CD8-positive, alpha-beta T cell (primary cell): ENCODE measurements at regions of chr13 and their contacts with region 1.

Region 1: GRCh38 chr13:110715395-110716235 is 2.1 kb downstream of the ING1 start:
- DNase-seq: peak; percentile 91 to 99 (median 95)
- ATAC-seq: peak; percentile 58
- H3K4me3 ChIP-seq: peak overlapping the region; percentile 68 to 100
- H3K4me3 Mint-ChIP-seq: peak overlapping the region; percentile 99
- H3K27ac ChIP-seq: peak overlapping the region; percentile 76 to 91
- H3K27ac Mint-ChIP-seq: peak overlapping the region; percentile 97
- H3K4me1 ChIP-seq: peaks cover 29% of the 10 kb centered on the region
- H3K4me1 Mint-ChIP-seq: peaks cover 34% of the 10 kb centered on the region
- H3K27me3 ChIP-seq: no peaks in the 10 kb centered on the region
- H3K27me3 Mint-ChIP-seq: no peaks in the 10 kb centered on the region
- CTCF ChIP-seq: no peak

Region 2: GRCh38 chr13:110561344-110562035 is 154.1 kb before region 1 on chr13 and contains the start of gene RAB20:
- CTCF ChIA-PET with region 1: interaction called, 3 read pairs
- POLR2A ChIA-PET with region 1: no interaction called
- intact Hi-C with region 1: loop called in 1 of 2 experiments (anchors 5 kb)
- DNase-seq: peak in 8 of 9 experiments; percentile 28 to 69 (median 54)
- ATAC-seq: peak; percentile 69
- H3K4me3 ChIP-seq: peak within 1 kb of the TSS; percentile 81 to 94
- H3K4me3 Mint-ChIP-seq: peak within 1 kb of the TSS; percentile 99
- H3K27ac ChIP-seq: peak within 1 kb of the TSS; percentile 37 to 52
- H3K27ac Mint-ChIP-seq: peak within 1 kb of the TSS; percentile 90
- H3K4me1 ChIP-seq: peaks cover 20% of the 10 kb centered on the region
- H3K4me1 Mint-ChIP-seq: peaks cover 15% of the 10 kb centered on the region
- H3K27me3 ChIP-seq: peaks cover 0 to 2% of the 10 kb centered on the region in 2 experiments
- H3K27me3 Mint-ChIP-seq: peaks cover 4% of the 10 kb centered on the region
- CTCF ChIP-seq: no peak
- total RNA-seq, gene RAB20: 1.2 to 1.3 TPM

Region 3: DNA sequence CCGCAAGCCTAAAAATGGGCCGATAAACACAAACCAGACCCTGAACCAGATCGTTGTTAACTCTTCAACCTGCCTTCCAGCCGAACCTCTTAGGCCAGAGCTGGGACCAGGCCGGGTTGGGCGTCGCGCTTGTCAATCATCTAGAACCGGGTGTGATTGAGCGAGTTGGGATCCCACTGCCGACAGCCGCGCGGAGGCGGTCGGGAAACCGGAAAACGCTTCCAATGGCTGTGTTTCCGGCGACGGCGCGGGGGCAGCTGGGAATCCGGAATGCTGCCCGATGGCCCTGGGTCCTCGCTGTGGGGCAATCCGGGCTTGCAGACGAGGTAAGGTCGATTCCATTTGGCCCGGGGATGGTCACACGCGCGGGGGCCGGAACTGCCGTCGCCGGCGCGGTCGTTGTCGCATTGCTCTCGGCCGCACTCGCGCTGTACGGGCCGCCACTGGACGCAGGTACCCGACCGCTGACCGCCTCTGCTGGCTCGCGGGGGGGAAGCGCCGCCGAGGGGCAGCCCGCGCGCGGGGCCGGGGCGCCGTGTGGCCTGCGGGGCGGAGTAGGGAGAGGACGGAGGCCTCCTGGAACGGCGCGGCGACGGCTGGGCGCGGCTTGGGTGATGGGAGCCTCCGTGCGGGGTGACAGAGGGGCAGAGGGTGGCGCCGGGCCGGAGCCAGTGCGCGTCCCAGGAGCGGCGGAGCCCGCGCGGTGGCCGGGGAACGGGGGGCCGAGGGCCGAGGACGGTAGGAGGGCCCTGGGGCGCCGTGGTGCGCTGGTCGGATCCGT is 100.1 kb before region 1 on chr13 and contains the start of gene NAXD:
- CTCF ChIA-PET with region 1: no interaction called
- POLR2A ChIA-PET with region 1: interaction called, 15 read pairs
- intact Hi-C with region 1: loop called in 1 of 2 experiments (anchors 1 kb)
- DNase-seq: peak; percentile 44 to 89 (median 72)
- ATAC-seq: peak; percentile 81
- H3K4me3 ChIP-seq: peak within 1 kb of the TSS; percentile 85 to 90
- H3K4me3 Mint-ChIP-seq: peak within 1 kb of the TSS; percentile 93
- H3K27ac ChIP-seq: peak within 1 kb of the TSS; percentile 53 to 59
- H3K27ac Mint-ChIP-seq: peak within 1 kb of the TSS; percentile 95
- H3K4me1 ChIP-seq: peaks cover 23% of the 10 kb centered on the region
- H3K4me1 Mint-ChIP-seq: peaks cover 34% of the 10 kb centered on the region
- H3K27me3 ChIP-seq: no peaks in the 10 kb centered on the region
- H3K27me3 Mint-ChIP-seq: no peaks in the 10 kb centered on the region
- CTCF ChIP-seq: no peak
- total RNA-seq, gene NAXD: 23.4 to 25.6 TPM

Region 4: DNA sequence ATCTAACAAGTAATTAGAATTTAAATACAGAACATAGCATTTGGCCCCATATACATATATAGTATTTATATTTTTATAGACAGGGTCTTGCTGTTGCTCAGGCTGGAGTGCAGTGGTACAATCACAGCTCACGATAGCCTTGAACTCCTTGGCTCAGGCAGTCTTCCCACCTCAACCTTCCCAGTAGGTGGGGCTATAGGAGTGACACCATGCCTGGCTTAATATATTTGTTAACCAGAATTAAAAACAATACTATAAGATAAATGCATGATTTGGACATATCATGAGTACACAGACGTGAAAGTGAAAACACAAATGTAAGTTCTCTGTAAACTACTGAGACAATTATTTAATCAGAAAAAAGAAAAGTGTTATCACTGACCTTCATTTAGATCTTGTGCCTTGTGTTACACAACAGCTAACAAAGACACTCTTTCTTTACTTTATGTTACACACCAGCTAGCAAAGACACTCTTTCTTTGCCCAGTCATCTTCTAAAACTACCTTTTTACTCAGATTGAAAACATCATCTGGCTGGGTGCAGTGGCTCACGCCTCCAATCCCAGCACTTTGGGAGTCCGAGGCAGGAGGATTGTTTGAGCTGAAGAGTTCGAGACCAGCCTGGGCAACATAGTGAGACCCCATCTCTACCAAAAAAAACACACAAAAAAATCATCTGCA is 32.3 kb before region 1 on chr13:
- CTCF ChIA-PET with region 1: no interaction called
- POLR2A ChIA-PET with region 1: interaction called, 6 read pairs
- intact Hi-C with region 1: loop called in 1 of 2 experiments (anchors 1 kb)
- DNase-seq: peak in 3 of 9 experiments; percentile 32 to 59 (median 54)
- ATAC-seq: no peak
- H3K4me3 ChIP-seq: no peak overlapping the region
- H3K4me3 Mint-ChIP-seq: no peak overlapping the region
- H3K27ac ChIP-seq: no peak overlapping the region
- H3K27ac Mint-ChIP-seq: peak overlapping the region; percentile 32
- H3K4me1 ChIP-seq: no peaks in the 10 kb centered on the region
- H3K4me1 Mint-ChIP-seq: peaks cover 4% of the 10 kb centered on the region
- H3K27me3 ChIP-seq: no peaks in the 10 kb centered on the region
- H3K27me3 Mint-ChIP-seq: no peaks in the 10 kb centered on the region
- CTCF ChIP-seq: peak; percentile 19

Region 5: GRCh38 chr13:110737555-110737954 is 21.9 kb after region 1 on chr13:
- CTCF ChIA-PET with region 1: no interaction called
- POLR2A ChIA-PET with region 1: no interaction called
- intact Hi-C with region 1: no loop called
- DNase-seq: no peak
- ATAC-seq: no peak
- H3K4me3 ChIP-seq: no peak overlapping the region
- H3K4me3 Mint-ChIP-seq: no peak overlapping the region
- H3K27ac ChIP-seq: no peak overlapping the region
- H3K27ac Mint-ChIP-seq: no peak overlapping the region
- H3K4me1 ChIP-seq: no peaks in the 10 kb centered on the region
- H3K4me1 Mint-ChIP-seq: no peaks in the 10 kb centered on the region
- H3K27me3 ChIP-seq: no peaks in the 10 kb centered on the region
- H3K27me3 Mint-ChIP-seq: no peaks in the 10 kb centered on the region
- CTCF ChIP-seq: no peak

Region 6: GRCh38 chr13:111153279-111153976 is 437.8 kb after region 1 on chr13:
- CTCF ChIA-PET with region 1: no interaction called
- POLR2A ChIA-PET with region 1: no interaction called
- intact Hi-C with region 1: loop called in 1 of 2 experiments (anchors 1 kb)
- DNase-seq: peak; percentile 86 to 96 (median 94)
- ATAC-seq: peak; percentile 81
- H3K4me3 ChIP-seq: peak overlapping the region; percentile 67 to 96
- H3K4me3 Mint-ChIP-seq: peak overlapping the region; percentile 96
- H3K27ac ChIP-seq: peak overlapping the region; percentile 75 to 79
- H3K27ac Mint-ChIP-seq: peak overlapping the region; percentile 96
- H3K4me1 ChIP-seq: peaks cover 20% of the 10 kb centered on the region
- H3K4me1 Mint-ChIP-seq: peaks cover 34% of the 10 kb centered on the region
- H3K27me3 ChIP-seq: no peaks in the 10 kb centered on the region
- H3K27me3 Mint-ChIP-seq: no peaks in the 10 kb centered on the region
- CTCF ChIP-seq: no peak

Region 7: GRCh38 chr13:111184458-111185401 is 469.1 kb after region 1 on chr13:
- CTCF ChIA-PET with region 1: no interaction called
- POLR2A ChIA-PET with region 1: interaction called, 3 read pairs
- intact Hi-C with region 1: loop called in 1 of 2 experiments (anchors 10 kb)
- DNase-seq: peak in 8 of 9 experiments; percentile 43 to 82 (median 66)
- ATAC-seq: peak; percentile 48
- H3K4me3 ChIP-seq: peak overlapping the region; percentile 5 to 22
- H3K4me3 Mint-ChIP-seq: peak overlapping the region; percentile 75
- H3K27ac ChIP-seq: peak overlapping the region; percentile 42 to 48
- H3K27ac Mint-ChIP-seq: peak overlapping the region; percentile 95
- H3K4me1 ChIP-seq: peaks cover 93% of the 10 kb centered on the region
- H3K4me1 Mint-ChIP-seq: peaks cover 100% of the 10 kb centered on the region
- H3K27me3 ChIP-seq: no peaks in the 10 kb centered on the region
- H3K27me3 Mint-ChIP-seq: no peaks in the 10 kb centered on the region
- CTCF ChIP-seq: no peak

Region 8: GRCh38 chr13:112587212-112587763 is 1871.7 kb after region 1 on chr13:
- CTCF ChIA-PET with region 1: no interaction called
- POLR2A ChIA-PET with region 1: no interaction called
- intact Hi-C with region 1: loop called in 1 of 2 experiments (anchors 10 kb)
- DNase-seq: peak; percentile 9 to 81 (median 68)
- ATAC-seq: peak; percentile 70
- H3K4me3 ChIP-seq: peak overlapping the region; percentile 76 to 83
- H3K4me3 Mint-ChIP-seq: peak overlapping the region; percentile 96
- H3K27ac ChIP-seq: peak overlapping the region; percentile 57 to 58
- H3K27ac Mint-ChIP-seq: peak overlapping the region; percentile 89
- H3K4me1 ChIP-seq: peaks cover 18% of the 10 kb centered on the region
- H3K4me1 Mint-ChIP-seq: peaks cover 44% of the 10 kb centered on the region
- H3K27me3 ChIP-seq: no peaks in the 10 kb centered on the region
- H3K27me3 Mint-ChIP-seq: no peaks in the 10 kb centered on the region
- CTCF ChIP-seq: no peak